ENCODE measurements at regions of chr3 and their contacts with region 1.

Region 1: DNA sequence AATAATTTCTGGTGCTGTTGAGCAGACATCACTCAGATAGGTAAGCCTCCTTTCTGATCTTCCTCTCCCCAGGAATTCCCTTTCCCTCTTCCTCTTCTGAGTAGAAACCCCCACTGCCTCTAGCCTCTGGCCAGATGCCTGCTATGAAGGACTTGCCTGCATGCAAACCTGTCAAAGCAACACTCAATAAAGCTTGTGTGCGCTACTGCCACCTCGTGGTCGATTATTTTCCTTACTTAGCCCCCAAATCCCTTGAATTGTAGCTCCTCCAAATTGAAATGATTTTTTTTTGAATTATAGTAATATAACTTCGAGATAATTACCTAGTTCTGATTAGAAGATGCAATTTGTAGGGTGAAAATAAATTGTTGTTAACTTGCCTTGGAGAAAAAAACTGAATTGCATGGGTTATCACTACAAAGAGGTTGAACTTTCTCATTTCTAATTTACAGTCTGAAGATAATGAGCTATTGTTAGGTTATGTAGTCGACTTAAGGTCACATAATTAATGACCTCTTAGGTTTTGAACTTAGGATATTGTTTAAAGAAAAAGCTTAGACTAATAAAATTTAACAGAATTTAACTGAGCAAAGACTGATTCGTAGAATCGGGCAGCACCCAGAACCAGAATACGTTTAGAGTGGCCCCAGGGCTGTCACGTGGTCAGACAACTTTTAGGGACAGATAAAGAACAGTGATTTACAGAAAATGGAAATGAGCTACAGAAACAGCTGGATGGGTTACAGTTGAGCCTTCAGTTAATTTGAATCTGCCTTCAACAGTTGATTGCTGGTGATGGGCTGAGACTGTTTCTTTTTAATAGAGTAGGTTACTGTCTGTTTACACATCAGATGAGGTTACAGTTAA is 269.3 kb downstream of the ARPP21 start:
- H3K4me3 ChIP-seq: no peak overlapping the region
- H3K27ac ChIP-seq: no peak overlapping the region
- H3K4me1 ChIP-seq: no peaks in the 10 kb centered on the region
- CTCF ChIP-seq: no peak

Region 2: GRCh38 chr3:35422836-35423601 is 485.6 kb before region 1 on chr3:
- CTCF ChIA-PET with region 1: no interaction called
- POLR2A ChIA-PET with region 1: no interaction called
- H3K4me3 ChIP-seq: no peak overlapping the region
- H3K27ac ChIP-seq: no peak overlapping the region
- H3K4me1 ChIP-seq: no peaks in the 10 kb centered on the region
- CTCF ChIP-seq: no peak

Region 3: GRCh38 chr3:35921706-35922105 is 13.1 kb after region 1 on chr3:
- CTCF ChIA-PET with region 1: interaction called, 13 read pairs
- POLR2A ChIA-PET with region 1: no interaction called
- H3K4me3 ChIP-seq: no peak overlapping the region
- H3K27ac ChIP-seq: no peak overlapping the region
- H3K4me1 ChIP-seq: no peaks in the 10 kb centered on the region
- CTCF ChIP-seq: no peak

Region 4: GRCh38 chr3:35929158-35929557 is 20.6 kb after region 1 on chr3:
- CTCF ChIA-PET with region 1: interaction called, 11 read pairs
- POLR2A ChIA-PET with region 1: no interaction called
- H3K4me3 ChIP-seq: no peak overlapping the region
- H3K27ac ChIP-seq: no peak overlapping the region
- H3K4me1 ChIP-seq: no peaks in the 10 kb centered on the region
- CTCF ChIP-seq: no peak

Measured in HEK293 (cell line).